Mammary epithelial cell (primary cell): ENCODE measurements at regions of chr20 and their contacts with region 1.

Region 1: GRCh38 chr20:47392015-47392720 is 35.7 kb upstream of the ZMYND8 start:
- DNase-seq: peak; percentile 97
- H3K4me3 ChIP-seq: no peak overlapping the region
- H3K27ac ChIP-seq: peak overlapping the region; percentile 99
- H3K4me1 ChIP-seq: peaks cover 21% of the 10 kb centered on the region
- H3K27me3 ChIP-seq: no peaks in the 10 kb centered on the region
- CTCF ChIP-seq: no peak

Region 2: GRCh38 chr20:47453142-47453782 is 61.1 kb after region 1 on chr20:
- CTCF ChIA-PET with region 1: no interaction called
- dilution Hi-C with region 1: no loop called
- in situ Hi-C with region 1: loop called in 1 of 2 experiments (anchors 5 kb)
- intact Hi-C with region 1: loop called (anchors 1 kb)
- DNase-seq: peak; percentile 95
- H3K4me3 ChIP-seq: no peak overlapping the region
- H3K27ac ChIP-seq: peak overlapping the region; percentile 99
- H3K4me1 ChIP-seq: peaks cover 35% of the 10 kb centered on the region
- H3K27me3 ChIP-seq: no peaks in the 10 kb centered on the region
- CTCF ChIP-seq: no peak

Region 3: GRCh38 chr20:47464380-47465101 is 72.4 kb after region 1 on chr20:
- CTCF ChIA-PET with region 1: no interaction called
- dilution Hi-C with region 1: no loop called
- in situ Hi-C with region 1: no loop called
- intact Hi-C with region 1: loop called (anchors 1 kb)
- DNase-seq: peak; percentile 96
- H3K4me3 ChIP-seq: no peak overlapping the region
- H3K27ac ChIP-seq: peak overlapping the region; percentile 38
- H3K4me1 ChIP-seq: peaks cover 20% of the 10 kb centered on the region
- H3K27me3 ChIP-seq: no peaks in the 10 kb centered on the region
- CTCF ChIP-seq: peak; percentile 56 to 59